ENCODE measurements at regions of chr21 and their contacts with region 1.

Region 1: GRCh38 chr21:43810505-43811261 is 21.3 kb downstream of the RRP1 start:
- DNase-seq: peak; percentile 98
- H3K4me3 Mint-ChIP-seq: no peak overlapping the region
- H3K27ac Mint-ChIP-seq: peak overlapping the region; percentile 56
- H3K4me1 Mint-ChIP-seq: peaks cover 13% of the 10 kb centered on the region
- H3K27me3 Mint-ChIP-seq: no peaks in the 10 kb centered on the region

Region 2: DNA sequence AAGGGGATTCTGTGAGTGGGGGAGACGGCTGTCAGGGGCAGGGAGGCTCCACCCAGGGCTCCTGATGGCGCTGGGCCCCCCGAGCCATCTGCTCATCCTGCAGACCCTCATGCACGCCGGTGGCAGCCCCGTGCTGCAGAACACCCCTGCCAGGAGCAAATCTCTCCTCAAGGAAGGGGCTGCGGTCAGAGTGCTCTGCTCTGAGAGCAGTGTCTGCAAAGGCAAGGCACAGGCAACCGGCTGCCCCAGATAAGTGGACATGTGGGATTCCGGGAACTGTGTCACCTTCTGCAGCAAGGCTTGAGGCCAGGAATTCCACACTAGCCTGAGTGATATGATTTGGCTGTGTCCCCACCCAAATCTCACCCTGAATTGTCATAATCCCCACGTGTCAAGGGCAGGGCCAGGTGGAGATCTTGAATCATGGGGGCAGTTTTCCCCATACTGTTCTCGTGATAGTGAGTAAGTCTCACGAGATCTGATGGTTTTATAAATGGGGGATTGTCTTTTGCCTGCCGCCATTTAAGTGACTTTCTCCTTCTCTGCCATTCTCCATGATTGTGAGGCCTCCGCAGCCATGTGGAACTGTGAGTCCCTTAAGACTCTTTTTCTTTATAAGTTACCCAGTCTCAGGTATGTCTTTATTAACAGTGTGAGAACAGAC is 1056.3 kb before region 1 on chr21:
- intact Hi-C with region 1: no loop called
- DNase-seq: no peak
- H3K4me3 Mint-ChIP-seq: no peak overlapping the region
- H3K27ac Mint-ChIP-seq: no peak overlapping the region
- H3K4me1 Mint-ChIP-seq: peaks cover 3% of the 10 kb centered on the region
- H3K27me3 Mint-ChIP-seq: no peaks in the 10 kb centered on the region

Region 3: GRCh38 chr21:43916691-43917514 is 106.2 kb after region 1 on chr21:
- intact Hi-C with region 1: loop called (anchors 5 kb)
- DNase-seq: peak; percentile 90
- H3K4me3 Mint-ChIP-seq: peak overlapping the region; percentile 87
- H3K27ac Mint-ChIP-seq: peak overlapping the region; percentile 89
- H3K4me1 Mint-ChIP-seq: peaks cover 56% of the 10 kb centered on the region
- H3K27me3 Mint-ChIP-seq: peaks cover 2% of the 10 kb centered on the region

Region 4: DNA sequence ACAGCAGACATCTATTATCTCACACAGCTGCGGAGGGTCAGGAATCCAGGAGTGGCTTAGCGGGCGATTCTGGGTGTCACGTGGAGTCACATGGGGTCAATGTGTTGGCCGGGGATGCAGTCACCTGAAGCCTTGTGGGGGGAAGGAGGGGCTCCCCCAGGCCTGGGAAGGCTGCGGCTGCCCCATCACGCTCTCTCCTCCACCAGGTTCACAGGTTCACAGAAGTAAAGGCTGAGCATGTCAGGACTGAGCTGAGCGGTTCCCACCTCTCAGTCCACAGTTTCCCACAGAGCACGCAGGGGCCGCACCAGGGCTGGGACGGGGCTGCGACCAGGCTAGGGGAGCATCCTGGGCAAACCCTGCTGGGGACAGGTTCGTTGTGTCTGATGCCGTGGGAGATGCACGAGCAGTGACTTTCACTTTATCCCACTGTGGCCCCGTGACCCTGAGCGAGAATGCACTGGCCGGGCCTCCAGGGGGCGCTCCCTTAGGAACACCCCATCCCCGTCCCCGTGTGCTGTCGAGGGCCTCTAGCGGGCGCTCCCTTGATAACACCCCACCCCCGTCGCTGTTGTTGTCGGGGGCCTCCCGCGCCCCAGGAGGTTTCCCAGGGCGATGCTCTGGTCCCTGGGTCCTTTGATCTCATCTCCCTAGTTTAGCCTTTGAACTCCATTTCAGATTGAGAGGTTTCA is 128.2 kb after region 1 on chr21:
- intact Hi-C with region 1: loop called (anchors 1 kb)
- DNase-seq: peak; percentile 97
- H3K4me3 Mint-ChIP-seq: peak overlapping the region; percentile 74
- H3K27ac Mint-ChIP-seq: peak overlapping the region; percentile 78
- H3K4me1 Mint-ChIP-seq: peaks cover 18% of the 10 kb centered on the region
- H3K27me3 Mint-ChIP-seq: no peaks in the 10 kb centered on the region

Region 5: GRCh38 chr21:43975495-43975993 is 164.9 kb after region 1 on chr21:
- intact Hi-C with region 1: loop called (anchors 1 kb)
- DNase-seq: peak; percentile 95
- H3K4me3 Mint-ChIP-seq: no peak overlapping the region
- H3K27ac Mint-ChIP-seq: peak overlapping the region; percentile 63
- H3K4me1 Mint-ChIP-seq: peaks cover 5% of the 10 kb centered on the region
- H3K27me3 Mint-ChIP-seq: no peaks in the 10 kb centered on the region